ENCODE measurements at regions of chr2 and their contacts with region 1.

Region 1: DNA sequence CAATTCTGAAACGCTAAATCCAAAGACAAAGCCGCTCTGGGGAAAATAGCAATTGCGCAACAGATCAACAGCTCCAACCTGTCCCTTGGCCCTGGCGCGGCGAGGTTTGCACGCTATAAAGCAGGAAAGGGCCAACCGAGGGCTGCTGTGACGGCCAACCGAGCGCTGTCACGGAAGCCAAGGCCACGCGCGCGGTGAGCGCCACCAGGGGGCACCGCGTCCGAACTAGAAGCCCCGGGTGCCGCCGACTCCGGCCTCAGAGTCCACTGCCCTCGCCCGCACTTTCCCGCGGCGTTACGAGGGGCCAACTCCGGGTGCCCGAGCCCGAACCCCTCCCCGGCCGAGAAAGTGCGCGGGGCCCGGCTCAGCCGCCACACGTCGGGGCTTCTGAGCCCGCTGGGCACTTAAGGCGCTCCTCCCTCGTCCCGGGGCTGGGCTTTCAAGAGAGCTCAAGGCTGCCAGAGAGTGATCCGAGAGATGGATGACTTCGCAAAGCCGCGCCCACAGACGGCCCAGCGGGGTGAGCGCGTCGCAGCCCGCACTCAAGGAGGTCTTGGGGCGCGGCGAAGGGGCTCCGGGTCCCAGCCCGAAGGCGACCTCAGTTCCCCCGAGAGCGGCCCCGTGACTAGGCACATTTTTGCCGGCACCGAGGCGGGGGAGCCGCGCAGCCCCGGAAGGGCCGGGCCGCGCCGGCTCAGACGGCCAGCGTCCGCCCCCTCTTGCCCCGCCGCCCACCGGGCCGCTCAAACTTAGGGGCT is 897 bp downstream of the NFE2L2 start:
- DNase-seq: peak; percentile 91 to 98 (median 95)
- ATAC-seq: peak; percentile 76
- H3K4me3 ChIP-seq: peak overlapping the region; percentile 80
- H3K4me3 Mint-ChIP-seq: peak overlapping the region; percentile 90 to 100 (median 95)
- H3K27ac ChIP-seq: peak overlapping the region; percentile 98
- H3K27ac Mint-ChIP-seq: peak overlapping the region; percentile 86 to 98 (median 96)
- H3K4me1 ChIP-seq: peaks cover 27 to 28% of the 10 kb centered on the region in 2 donors
- H3K4me1 Mint-ChIP-seq: peaks cover 28 to 62% (median 56%) of the 10 kb centered on the region in 7 donors
- H3K27me3 ChIP-seq: no peaks in the 10 kb centered on the region
- H3K27me3 Mint-ChIP-seq: no peaks in the 10 kb centered on the region

Region 2: DNA sequence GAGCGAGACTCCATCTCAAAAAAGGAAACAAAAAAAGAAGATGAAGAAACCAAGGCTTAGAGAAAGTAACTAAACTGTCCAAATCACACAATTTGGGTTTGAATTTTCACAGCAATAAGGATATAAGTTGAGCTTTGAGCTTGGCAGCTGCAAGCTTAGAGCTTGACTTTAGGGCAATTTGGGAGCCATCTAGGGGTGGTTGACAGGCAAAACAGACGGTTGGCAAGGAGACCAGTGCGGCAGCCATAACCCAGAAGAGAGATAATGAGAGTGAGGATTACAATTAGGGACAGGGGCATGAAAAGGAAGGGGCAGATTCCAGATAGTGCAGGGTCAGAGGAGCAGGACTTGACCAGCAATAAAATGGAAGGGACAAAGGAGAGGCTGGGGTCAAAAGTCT is 433.3 kb before region 1 on chr2:
- CTCF ChIA-PET with region 1: no interaction called
- POLR2A ChIA-PET with region 1: no interaction called
- intact Hi-C with region 1: no loop called
- DNase-seq: peak in 5 of 9 donors; percentile 27 to 44 (median 40)
- ATAC-seq: peak; percentile 51
- H3K4me3 ChIP-seq: no peak overlapping the region
- H3K4me3 Mint-ChIP-seq: no peak overlapping the region
- H3K27ac ChIP-seq: no peak overlapping the region
- H3K27ac Mint-ChIP-seq: peak overlapping the region in 7 of 9 donors; percentile 1 to 70 (median 25)
- H3K4me1 ChIP-seq: peaks cover 9 to 21% of the 10 kb centered on the region in 2 donors
- H3K4me1 Mint-ChIP-seq: peaks cover 17 to 46% (median 34%) of the 10 kb centered on the region in 7 donors
- H3K27me3 ChIP-seq: no peaks in the 10 kb centered on the region
- H3K27me3 Mint-ChIP-seq: peaks cover 0 to 16% (median 3%) of the 10 kb centered on the region in 5 donors

Region 3: GRCh38 chr2:177164584-177165052 is 99.0 kb before region 1 on chr2:
- CTCF ChIA-PET with region 1: interaction called, 69 read pairs
- POLR2A ChIA-PET with region 1: interaction called, 176 read pairs
- intact Hi-C with region 1: loop called (anchors 1 kb)
- DNase-seq: peak; percentile 65 to 77 (median 71)
- ATAC-seq: peak; percentile 89
- H3K4me3 ChIP-seq: peak overlapping the region; percentile 25
- H3K4me3 Mint-ChIP-seq: no peak overlapping the region
- H3K27ac ChIP-seq: peak overlapping the region; percentile 66
- H3K27ac Mint-ChIP-seq: no peak overlapping the region
- H3K4me1 ChIP-seq: peaks cover 11 to 16% of the 10 kb centered on the region in 2 donors
- H3K4me1 Mint-ChIP-seq: peaks cover 0 to 33% (median 12%) of the 10 kb centered on the region in 7 donors
- H3K27me3 ChIP-seq: no peaks in the 10 kb centered on the region
- H3K27me3 Mint-ChIP-seq: peaks cover 0 to 7% (median 0%) of the 10 kb centered on the region in 5 donors

Region 4: GRCh38 chr2:177187631-177188312 is 75.9 kb before region 1 on chr2:
- CTCF ChIA-PET with region 1: no interaction called
- POLR2A ChIA-PET with region 1: no interaction called
- intact Hi-C with region 1: no loop called
- DNase-seq: no peak
- ATAC-seq: no peak
- H3K4me3 ChIP-seq: no peak overlapping the region
- H3K4me3 Mint-ChIP-seq: no peak overlapping the region
- H3K27ac ChIP-seq: no peak overlapping the region
- H3K27ac Mint-ChIP-seq: no peak overlapping the region
- H3K4me1 ChIP-seq: no peaks in the 10 kb centered on the region
- H3K4me1 Mint-ChIP-seq: peaks cover 0 to 3% (median 0%) of the 10 kb centered on the region in 7 donors
- H3K27me3 ChIP-seq: no peaks in the 10 kb centered on the region
- H3K27me3 Mint-ChIP-seq: peaks cover 0 to 15% (median 0%) of the 10 kb centered on the region in 5 donors

Region 5: DNA sequence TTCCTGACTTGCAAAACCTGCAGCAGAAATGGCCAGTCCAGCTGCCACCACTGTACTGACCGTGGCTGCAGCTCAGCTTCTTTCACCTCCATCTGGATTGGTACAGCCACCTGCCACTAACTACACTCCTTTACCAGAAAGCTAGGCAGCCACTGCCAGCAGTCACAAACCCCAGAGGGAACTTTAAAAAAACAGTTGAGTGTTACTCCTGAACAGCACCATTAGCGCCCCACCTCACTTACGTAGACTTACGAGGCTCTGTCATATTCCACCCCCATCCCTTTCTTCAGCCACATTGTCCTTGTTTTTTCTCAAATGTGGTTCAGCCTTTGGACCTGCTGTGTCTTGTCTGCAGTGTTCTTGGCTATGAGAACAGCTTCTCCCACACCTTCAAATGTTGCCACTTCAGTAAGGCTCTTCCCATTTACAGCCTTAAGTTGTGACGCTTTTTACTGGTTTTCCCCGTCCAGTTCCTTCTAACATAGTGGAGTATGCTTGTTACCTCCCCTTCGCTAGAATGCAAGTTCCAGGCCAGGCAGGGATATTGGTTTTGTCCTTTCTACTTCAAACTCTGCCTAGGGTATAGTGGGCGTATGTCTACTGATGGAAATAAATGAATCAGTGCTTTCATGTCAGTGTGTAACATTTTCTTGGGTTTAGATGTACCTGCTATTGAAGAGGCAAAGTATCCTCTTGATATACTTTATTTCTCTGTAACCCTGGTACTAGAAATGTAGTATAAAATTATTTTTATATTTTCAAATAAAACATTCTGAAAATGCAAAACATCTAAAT is 34.0 kb before region 1 on chr2:
- CTCF ChIA-PET with region 1: interaction called, 23 read pairs
- POLR2A ChIA-PET with region 1: interaction called, 141 read pairs
- intact Hi-C with region 1: loop called in 1 of 2 experiments (anchors 5 kb)
- DNase-seq: no peak
- ATAC-seq: no peak
- H3K4me3 ChIP-seq: no peak overlapping the region
- H3K4me3 Mint-ChIP-seq: no peak overlapping the region
- H3K27ac ChIP-seq: no peak overlapping the region
- H3K27ac Mint-ChIP-seq: peak overlapping the region; percentile 36 to 87 (median 74)
- H3K4me1 ChIP-seq: no peaks in the 10 kb centered on the region
- H3K4me1 Mint-ChIP-seq: peaks cover 21 to 57% (median 53%) of the 10 kb centered on the region in 7 donors
- H3K27me3 ChIP-seq: no peaks in the 10 kb centered on the region
- H3K27me3 Mint-ChIP-seq: no peaks in the 10 kb centered on the region

Region 6: GRCh38 chr2:177281400-177282180 is 18.0 kb after region 1 on chr2:
- CTCF ChIA-PET with region 1: interaction called, 5 read pairs
- POLR2A ChIA-PET with region 1: interaction called, 23 read pairs
- intact Hi-C with region 1: no loop called
- DNase-seq: no peak
- ATAC-seq: peak; percentile 88
- H3K4me3 ChIP-seq: no peak overlapping the region
- H3K4me3 Mint-ChIP-seq: no peak overlapping the region
- H3K27ac ChIP-seq: no peak overlapping the region
- H3K27ac Mint-ChIP-seq: peak overlapping the region in 1 of 9 donors; percentile 66
- H3K4me1 ChIP-seq: no peaks in the 10 kb centered on the region
- H3K4me1 Mint-ChIP-seq: peaks cover 0 to 21% (median 0%) of the 10 kb centered on the region in 7 donors
- H3K27me3 ChIP-seq: no peaks in the 10 kb centered on the region
- H3K27me3 Mint-ChIP-seq: no peaks in the 10 kb centered on the region

Region 7: DNA sequence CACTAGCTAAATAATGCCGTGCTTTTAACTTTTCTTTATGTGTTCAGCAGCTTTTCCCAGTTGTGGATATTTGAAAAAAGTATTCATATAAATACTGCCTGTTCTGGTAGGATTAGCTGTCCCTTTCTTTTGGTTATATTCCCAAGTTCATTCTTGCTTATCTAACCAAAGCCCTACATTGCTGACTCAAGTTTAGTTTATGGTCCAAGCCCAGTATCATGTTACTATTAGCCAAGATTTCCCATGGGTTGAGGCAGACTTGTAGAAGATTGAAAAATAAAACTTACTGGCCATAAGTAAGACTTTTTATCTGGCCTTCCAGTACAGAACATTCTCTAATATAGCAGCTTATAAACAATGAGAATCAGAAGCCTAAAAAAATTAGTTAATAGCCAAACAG is 50.6 kb after region 1 on chr2:
- CTCF ChIA-PET with region 1: interaction called, 27 read pairs
- POLR2A ChIA-PET with region 1: interaction called, 282 read pairs
- intact Hi-C with region 1: loop called in 1 of 2 experiments (anchors 1 kb)
- DNase-seq: no peak
- ATAC-seq: no peak
- H3K4me3 ChIP-seq: no peak overlapping the region
- H3K4me3 Mint-ChIP-seq: no peak overlapping the region
- H3K27ac ChIP-seq: no peak overlapping the region
- H3K27ac Mint-ChIP-seq: peak overlapping the region in 7 of 9 donors; percentile 36 to 97 (median 73)
- H3K4me1 ChIP-seq: peaks cover 6 to 13% of the 10 kb centered on the region in 2 donors
- H3K4me1 Mint-ChIP-seq: peaks cover 17 to 54% (median 31%) of the 10 kb centered on the region in 7 donors
- H3K27me3 ChIP-seq: no peaks in the 10 kb centered on the region
- H3K27me3 Mint-ChIP-seq: no peaks in the 10 kb centered on the region

Region 8: DNA sequence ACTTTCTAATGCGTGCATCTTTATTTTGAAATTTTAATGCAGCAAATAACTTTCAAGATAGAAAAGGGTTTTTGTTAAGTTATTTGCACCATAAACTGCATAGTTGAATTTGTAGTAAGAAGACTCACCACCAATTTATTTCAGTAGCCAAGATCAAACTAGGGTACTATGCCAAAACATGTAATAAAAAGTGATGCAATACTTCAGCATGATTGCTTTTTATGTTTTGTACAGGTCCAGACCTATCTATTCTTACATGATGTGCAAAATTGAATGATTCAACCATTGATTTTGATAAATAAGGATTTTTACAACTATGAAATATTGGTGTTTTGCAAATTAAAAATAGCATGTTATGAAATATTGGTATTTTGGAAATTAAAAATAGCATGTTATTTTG is 155.6 kb after region 1 on chr2:
- CTCF ChIA-PET with region 1: interaction called, 4 read pairs
- POLR2A ChIA-PET with region 1: interaction called, 24 read pairs
- intact Hi-C with region 1: loop called (anchors 1 kb)
- DNase-seq: no peak
- ATAC-seq: no peak
- H3K4me3 ChIP-seq: no peak overlapping the region
- H3K4me3 Mint-ChIP-seq: no peak overlapping the region
- H3K27ac ChIP-seq: no peak overlapping the region
- H3K27ac Mint-ChIP-seq: peak overlapping the region in 1 of 9 donors; percentile 22
- H3K4me1 ChIP-seq: no peaks in the 10 kb centered on the region
- H3K4me1 Mint-ChIP-seq: peaks cover 5 to 54% (median 27%) of the 10 kb centered on the region in 7 donors
- H3K27me3 ChIP-seq: no peaks in the 10 kb centered on the region
- H3K27me3 Mint-ChIP-seq: no peaks in the 10 kb centered on the region

Region 9: DNA sequence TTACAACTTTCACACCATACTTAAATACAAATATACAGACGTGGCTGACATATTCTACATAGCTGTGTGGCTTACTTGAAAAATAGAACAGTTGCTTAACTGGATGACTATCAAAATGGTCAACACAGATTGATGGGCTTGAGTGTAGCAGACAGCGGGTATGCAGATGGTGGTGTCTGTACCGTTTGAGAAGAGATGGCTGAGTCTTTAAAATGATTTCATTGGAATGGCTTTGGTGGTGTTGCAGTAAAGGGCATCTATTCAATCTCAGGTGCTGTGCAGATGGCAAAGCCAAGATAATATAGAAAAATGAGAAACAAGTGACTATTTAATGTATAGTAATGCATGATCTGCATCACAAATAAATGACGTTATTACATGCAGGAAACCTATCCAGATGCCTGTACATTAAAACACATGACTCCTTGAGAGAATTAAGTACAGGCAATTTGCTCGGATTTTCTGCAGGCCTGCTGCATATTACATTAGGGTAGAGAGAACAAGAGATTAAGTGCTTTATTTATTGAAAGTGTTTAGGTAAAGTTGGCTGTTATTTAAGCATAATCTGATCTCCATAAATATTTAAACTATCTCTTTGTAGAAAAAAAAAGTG is 197.4 kb after region 1 on chr2:
- CTCF ChIA-PET with region 1: no interaction called
- POLR2A ChIA-PET with region 1: no interaction called
- intact Hi-C with region 1: no loop called
- DNase-seq: no peak
- ATAC-seq: no peak
- H3K4me3 ChIP-seq: no peak overlapping the region
- H3K4me3 Mint-ChIP-seq: no peak overlapping the region
- H3K27ac ChIP-seq: no peak overlapping the region
- H3K27ac Mint-ChIP-seq: no peak overlapping the region
- H3K4me1 ChIP-seq: no peaks in the 10 kb centered on the region
- H3K4me1 Mint-ChIP-seq: peaks cover 0 to 4% (median 0%) of the 10 kb centered on the region in 7 donors
- H3K27me3 ChIP-seq: no peaks in the 10 kb centered on the region
- H3K27me3 Mint-ChIP-seq: no peaks in the 10 kb centered on the region